Prostate gland (tissue), 2 donors: ENCODE measurements at regions of chr13 and their contacts with region 1.

Region 1: DNA sequence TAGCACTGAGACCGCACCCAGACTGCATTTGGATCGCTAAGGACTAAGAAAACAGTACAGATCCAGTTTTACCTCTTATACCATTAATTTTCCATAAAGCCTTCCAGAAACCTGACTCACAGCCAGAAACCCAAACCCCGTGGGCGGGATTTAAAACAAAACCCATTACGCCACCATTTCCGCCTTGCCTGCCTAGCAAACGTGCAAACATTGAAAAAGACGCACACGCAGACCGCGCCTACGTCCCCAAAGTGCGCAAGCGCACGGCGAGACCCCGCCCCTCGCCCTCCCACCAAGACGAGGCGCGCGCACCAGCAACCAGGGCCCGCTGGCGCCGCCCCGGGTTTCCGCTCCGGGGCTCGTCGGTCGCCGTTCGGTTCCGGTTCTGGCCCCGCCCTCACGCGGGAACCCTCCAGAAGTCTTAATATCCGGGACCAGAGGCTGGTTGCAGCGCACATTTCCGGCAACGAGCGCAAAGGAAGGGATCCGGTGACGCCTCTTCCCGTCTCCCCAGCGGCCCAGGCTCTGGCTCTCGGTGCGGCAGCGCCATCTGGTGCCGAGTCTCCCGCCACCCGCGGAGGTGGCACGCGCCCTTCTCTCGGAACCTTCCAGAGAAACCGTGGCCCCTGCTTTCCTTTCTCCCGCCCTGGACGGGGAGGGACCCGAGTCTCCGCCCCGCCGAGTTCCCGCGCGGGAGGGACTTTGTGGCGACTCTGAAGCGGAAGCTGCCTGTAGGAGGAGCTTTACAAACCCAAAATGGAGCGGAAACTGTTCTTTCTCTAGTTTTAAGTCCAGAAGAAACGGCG is 256.9 kb upstream of the STARD13 start:
- DNase-seq: peak; percentile 98
- H3K4me3 ChIP-seq: peak overlapping the region; percentile 30 to 48
- H3K27ac ChIP-seq: peak overlapping the region; percentile 96 to 99
- H3K4me1 ChIP-seq: peaks cover 3% of the 10 kb centered on the region
- H3K27me3 ChIP-seq: no peaks in the 10 kb centered on the region
- CTCF ChIP-seq: peak; percentile 85 to 99 (median 98)
- POLR2A ChIP-seq: peak; percentile 73

Region 2: GRCh38 chr13:33017323-33017929 is 525.1 kb before region 1 on chr13:
- intact Hi-C with region 1: loop called (anchors 10 kb)
- DNase-seq: no peak
- H3K4me3 ChIP-seq: peak overlapping the region; percentile 33 to 41
- H3K27ac ChIP-seq: peak overlapping the region; percentile 68 to 72
- H3K4me1 ChIP-seq: no peaks in the 10 kb centered on the region
- H3K27me3 ChIP-seq: no peaks in the 10 kb centered on the region
- CTCF ChIP-seq: peak in 2 of 4 experiments; percentile 39 to 45
- POLR2A ChIP-seq: no peak

Region 3: GRCh38 chr13:33228648-33229445 is 313.6 kb before region 1 on chr13:
- intact Hi-C with region 1: loop called (anchors 5 kb)
- DNase-seq: no peak
- H3K4me3 ChIP-seq: no peak overlapping the region
- H3K27ac ChIP-seq: peak overlapping the region; percentile 49 to 66
- H3K4me1 ChIP-seq: peaks cover 6% of the 10 kb centered on the region
- H3K27me3 ChIP-seq: no peaks in the 10 kb centered on the region
- CTCF ChIP-seq: peak; percentile 71 to 83 (median 80)
- POLR2A ChIP-seq: no peak